AG04449 (cell line): ENCODE measurements at regions of chr7 and their contacts with region 1.

Region 1: GRCh38 chr7:4641667-4642467 is 40.2 kb upstream of the FOXK1 start:
- DNase-seq: peak; percentile 36
- H3K4me3 ChIP-seq: peak overlapping the region; percentile 75
- CTCF ChIP-seq: peak; percentile 62

Region 2: DNA sequence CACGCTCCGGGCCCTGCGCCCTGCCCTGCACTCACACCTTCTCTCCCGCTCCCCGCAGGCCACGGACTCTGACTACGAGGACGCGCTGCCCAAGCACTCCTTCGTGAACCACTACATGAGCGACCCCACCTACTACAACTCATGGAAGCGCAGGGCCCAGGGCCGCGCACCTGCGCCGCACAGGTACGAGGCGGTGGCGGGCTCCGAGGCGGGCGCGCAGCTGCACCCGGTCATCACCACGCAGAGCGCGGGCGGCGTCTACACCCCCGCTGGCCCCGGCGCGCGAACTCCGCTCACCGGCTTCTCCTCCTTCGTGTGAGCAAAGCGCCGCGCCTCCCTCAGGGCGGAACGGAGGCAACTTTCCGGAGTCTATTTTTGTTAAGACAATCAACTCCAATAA is 376.8 kb before region 1 on chr7:
- CTCF ChIA-PET with region 1: no interaction called
- POLR2A ChIA-PET with region 1: no interaction called
- DNase-seq: no peak
- H3K4me3 ChIP-seq: no peak overlapping the region
- CTCF ChIP-seq: no peak

Region 3: DNA sequence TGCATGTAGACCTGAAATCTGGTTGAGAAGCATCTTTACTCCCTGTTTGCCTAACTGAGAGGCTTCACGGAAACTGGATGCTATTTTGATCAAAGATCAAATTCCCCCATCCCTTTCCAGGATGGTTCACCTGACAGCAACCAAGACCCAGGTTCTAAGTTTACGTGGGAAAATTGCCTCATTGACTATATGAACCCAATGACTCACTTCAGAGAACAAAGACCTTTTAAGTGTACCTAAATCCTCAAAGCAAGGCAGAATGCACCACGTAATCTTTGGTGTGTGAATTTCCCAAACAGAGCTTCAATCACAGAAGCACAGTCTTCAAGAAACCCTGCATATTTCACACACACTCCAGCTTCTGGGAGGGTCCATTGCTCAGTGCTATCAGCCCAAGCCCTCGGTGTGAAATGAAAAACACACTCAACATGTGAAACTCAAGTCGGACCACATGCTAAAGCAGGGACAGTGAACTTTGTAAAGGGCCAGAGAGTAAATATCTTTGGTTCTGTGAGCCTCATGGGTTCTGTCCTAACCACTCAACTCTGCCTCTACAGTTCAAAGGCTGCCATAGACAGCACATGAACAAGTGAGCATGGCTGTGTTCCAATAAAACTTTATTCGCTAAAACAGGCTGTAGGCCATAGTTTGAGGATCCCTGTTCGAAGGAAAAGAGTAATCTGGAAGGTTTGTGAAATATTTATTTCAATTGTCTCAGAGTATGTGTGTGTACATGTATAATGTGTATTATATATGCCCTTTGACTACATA is 235.4 kb before region 1 on chr7:
- CTCF ChIA-PET with region 1: no interaction called
- POLR2A ChIA-PET with region 1: no interaction called
- DNase-seq: no peak
- H3K4me3 ChIP-seq: no peak overlapping the region
- CTCF ChIP-seq: no peak

Region 4: DNA sequence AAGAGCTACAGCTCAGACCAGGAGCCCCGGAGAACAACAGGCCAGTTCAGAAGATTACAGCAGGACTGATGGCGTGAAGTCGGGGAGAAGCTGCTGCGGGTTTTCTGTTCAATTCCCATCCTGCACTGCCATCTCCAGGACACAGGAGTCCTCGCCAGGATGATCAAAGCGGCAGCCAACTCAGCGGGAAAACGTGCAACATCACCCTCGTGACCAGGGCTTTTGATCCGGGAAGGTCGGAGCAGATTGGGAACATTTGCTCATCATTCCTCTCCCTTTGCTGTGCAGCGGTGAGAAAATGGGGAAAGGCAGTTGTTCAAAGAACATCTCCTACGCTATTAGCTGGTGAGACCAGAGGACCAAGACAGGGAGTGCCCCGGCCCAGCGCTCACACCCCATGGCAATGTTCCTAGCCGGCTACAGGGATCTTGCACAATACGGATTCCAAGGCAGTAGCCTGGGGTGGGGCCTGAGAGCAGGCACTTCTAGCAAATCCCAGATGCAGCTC is 10.1 kb before region 1 on chr7:
- CTCF ChIA-PET with region 1: interaction called, 12 read pairs
- POLR2A ChIA-PET with region 1: interaction called, 4 read pairs
- DNase-seq: peak; percentile 60
- H3K4me3 ChIP-seq: peak overlapping the region; percentile 53
- CTCF ChIP-seq: peak; percentile 79

Region 5: GRCh38 chr7:4667776-4668509 is 26.1 kb after region 1 on chr7:
- CTCF ChIA-PET with region 1: interaction called, 3 read pairs
- POLR2A ChIA-PET with region 1: interaction called, 15 read pairs
- DNase-seq: peak; percentile 98
- H3K4me3 ChIP-seq: peak overlapping the region; percentile 29
- CTCF ChIP-seq: no peak

Region 6: DNA sequence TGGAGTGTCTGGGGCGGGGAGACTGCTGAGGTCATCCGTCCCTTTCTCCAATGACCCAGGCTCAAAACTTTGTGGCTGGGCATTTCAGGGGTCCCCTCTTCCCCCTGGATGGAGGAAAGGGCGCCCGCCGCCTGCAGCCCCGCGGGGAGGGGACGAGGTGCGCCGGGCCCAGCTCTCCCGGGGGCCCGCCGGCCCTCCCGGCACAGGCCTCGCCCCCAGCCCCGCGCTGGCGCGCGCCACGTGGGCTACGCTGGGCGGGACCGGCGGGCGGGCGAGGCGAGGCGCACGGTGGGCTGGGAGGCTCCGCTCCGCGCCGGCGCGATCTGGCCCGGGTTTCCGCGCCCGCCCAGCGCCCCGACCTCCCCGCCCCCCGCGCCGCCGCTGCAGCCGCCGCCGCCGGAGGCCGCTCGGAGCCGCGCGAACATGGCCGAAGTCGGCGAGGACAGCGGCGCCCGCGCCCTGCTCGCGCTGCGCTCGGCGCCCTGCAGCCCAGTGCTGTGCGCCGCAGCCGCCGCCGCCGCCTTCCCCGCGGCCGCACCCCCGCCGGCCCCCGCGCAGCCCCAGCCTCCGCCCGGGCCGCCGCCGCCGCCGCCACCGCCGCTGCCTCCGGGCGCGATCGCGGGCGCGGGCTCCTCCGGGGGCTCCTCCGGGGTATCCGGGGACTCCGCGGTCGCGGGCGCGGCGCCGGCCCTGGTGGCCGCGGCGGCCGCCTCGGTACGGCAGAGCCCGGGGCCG is 40.2 kb after region 1 on chr7 and contains the start of gene FOXK1:
- CTCF ChIA-PET with region 1: interaction called, 16 read pairs
- POLR2A ChIA-PET with region 1: interaction called, 31 read pairs
- DNase-seq: no peak
- H3K4me3 ChIP-seq: peak within 1 kb of the TSS; percentile 80
- CTCF ChIP-seq: no peak

Region 7: GRCh38 chr7:4775250-4775847 is 133.5 kb after region 1 on chr7 and contains the start of gene AP5Z1:
- CTCF ChIA-PET with region 1: interaction called, 8 read pairs
- POLR2A ChIA-PET with region 1: interaction called, 13 read pairs
- DNase-seq: peak; percentile 76
- H3K4me3 ChIP-seq: peak within 1 kb of the TSS; percentile 98
- CTCF ChIP-seq: no peak

Region 8: GRCh38 chr7:5218564-5219360 is 576.9 kb after region 1 on chr7:
- CTCF ChIA-PET with region 1: no interaction called
- POLR2A ChIA-PET with region 1: no interaction called
- DNase-seq: no peak
- H3K4me3 ChIP-seq: no peak overlapping the region
- CTCF ChIP-seq: no peak